HCT116 (cell line): ENCODE measurements at regions of chr16 and their contacts with region 1.

Region 1: DNA sequence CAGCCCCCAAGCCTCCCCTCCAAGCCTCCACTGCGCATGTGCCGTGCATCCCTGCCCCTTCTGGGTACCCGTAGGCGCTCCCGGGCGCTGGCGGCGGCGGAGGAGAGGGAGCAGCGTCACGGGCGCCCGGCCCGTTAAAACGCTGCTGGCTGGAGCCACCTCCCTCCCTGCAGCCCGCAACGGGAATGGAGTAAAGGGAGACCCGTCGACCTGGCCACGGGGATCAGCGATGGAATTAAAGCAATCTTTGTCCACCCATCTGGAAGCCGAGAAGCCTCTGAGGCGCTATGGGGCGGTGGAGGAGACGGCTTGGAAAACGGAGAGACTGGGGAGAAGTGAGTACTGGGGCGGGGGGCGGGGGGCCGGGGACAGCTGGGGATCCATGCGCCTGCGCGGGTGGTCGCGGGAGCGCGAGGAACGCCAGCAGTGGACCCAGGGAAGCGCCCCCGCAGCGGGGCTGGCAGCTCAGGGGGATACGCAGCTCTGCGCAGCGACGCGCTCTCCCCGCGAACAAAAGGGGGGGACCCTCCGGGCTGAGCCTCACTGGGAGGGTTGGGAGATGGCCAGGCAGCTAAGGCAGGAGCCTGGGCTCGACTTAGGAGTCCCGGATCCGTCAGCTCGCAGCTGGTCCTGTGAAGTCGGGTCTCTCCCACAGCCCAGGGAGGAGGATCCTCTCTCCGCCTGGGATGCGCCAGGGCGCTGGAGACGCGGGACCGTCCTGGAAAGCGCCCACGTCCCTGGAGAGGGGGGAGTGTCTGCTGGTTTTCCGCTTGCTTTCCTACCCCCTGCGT is at the start of gene BMERB1:
- DNase-seq: peak; percentile 12
- ATAC-seq: peak; percentile 76
- H3K4me3 ChIP-seq: peak within 1 kb of the TSS; percentile 68 to 71
- H3K27ac ChIP-seq: no peak within 1 kb of the TSS; the same call in 1 of the 2 replicates
- H3K4me1 ChIP-seq: peaks cover 18 to 34% of the 10 kb centered on the region in 2 experiments
- H3K27me3 ChIP-seq: no peaks in the 10 kb centered on the region
- CTCF ChIP-seq: no peak
- POLR2A ChIP-seq: no peak
- RAD21 ChIP-seq: no peak
- total RNA-seq, gene BMERB1: 43.6 TPM

Region 2: GRCh38 chr16:15415411-15416037 is 19.1 kb before region 1 on chr16:
- CTCF ChIA-PET with region 1: no interaction called
- POLR2A ChIA-PET with region 1: no interaction called
- RAD21 ChIA-PET with region 1: no interaction called
- intact Hi-C with region 1: no loop called
- DNase-seq: no peak
- ATAC-seq: no peak
- H3K4me3 ChIP-seq: no peak overlapping the region
- H3K27ac ChIP-seq: no peak overlapping the region
- H3K4me1 ChIP-seq: peaks cover 0 to 17% of the 10 kb centered on the region in 2 experiments; a peak in 2 of 4 replicates
- H3K27me3 ChIP-seq: no peaks in the 10 kb centered on the region
- CTCF ChIP-seq: no peak
- POLR2A ChIP-seq: no peak
- RAD21 ChIP-seq: no peak

Region 3: GRCh38 chr16:15482068-15482747 is 47.6 kb after region 1 on chr16:
- CTCF ChIA-PET with region 1: no interaction called
- POLR2A ChIA-PET with region 1: no interaction called
- RAD21 ChIA-PET with region 1: no interaction called
- intact Hi-C with region 1: loop called (anchors 10 kb)
- DNase-seq: peak; percentile 99
- ATAC-seq: peak; percentile 99
- H3K4me3 ChIP-seq: peak overlapping the region in 1 of 2 experiments; percentile 11; a peak in 2 of 4 replicates
- H3K27ac ChIP-seq: peak overlapping the region; percentile 87
- H3K4me1 ChIP-seq: peaks cover 19 to 69% of the 10 kb centered on the region in 2 experiments
- H3K27me3 ChIP-seq: no peaks in the 10 kb centered on the region
- CTCF ChIP-seq: peak in 2 of 3 experiments; percentile 10 to 13; a peak in 2 of 6 replicates
- POLR2A ChIP-seq: peak; percentile 70
- RAD21 ChIP-seq: peak; percentile 54; the same call in 1 of the 2 replicates

Region 4: DNA sequence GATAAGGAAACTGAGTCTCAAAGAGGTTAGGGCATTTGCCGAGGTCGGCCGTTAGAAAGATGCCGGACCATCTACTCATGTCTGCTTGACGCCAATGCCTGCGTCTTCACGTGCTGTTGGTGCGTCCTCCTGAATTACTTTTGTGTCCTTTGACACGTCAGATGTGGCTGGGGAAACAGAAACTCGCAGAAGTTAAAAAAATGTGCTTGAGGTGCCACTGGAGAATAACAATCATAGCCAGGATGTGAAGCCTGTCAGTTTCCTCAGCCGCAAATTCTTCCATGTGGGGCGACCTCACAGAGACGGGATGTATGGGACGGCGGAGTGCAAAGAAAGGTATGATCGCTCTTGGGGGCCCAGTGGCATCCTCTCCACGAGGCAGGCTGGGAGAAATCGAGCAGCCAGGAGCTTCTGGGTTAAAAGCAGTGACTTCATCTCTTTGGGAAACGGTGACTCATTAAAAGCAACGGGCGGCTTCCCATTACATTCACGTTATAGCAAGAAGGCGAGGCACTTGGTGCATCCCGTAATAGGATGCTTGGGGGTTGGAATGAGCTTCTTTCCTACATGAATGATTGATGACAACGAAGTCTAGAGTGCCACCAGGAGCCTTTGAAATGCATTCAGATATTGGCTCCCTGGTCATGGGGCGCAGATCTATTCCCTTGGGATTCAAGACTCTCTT is 67.6 kb after region 1 on chr16:
- CTCF ChIA-PET with region 1: no interaction called
- POLR2A ChIA-PET with region 1: no interaction called
- RAD21 ChIA-PET with region 1: no interaction called
- intact Hi-C with region 1: loop called (anchors 5 kb)
- DNase-seq: peak; percentile 95
- ATAC-seq: peak; percentile 82
- H3K4me3 ChIP-seq: peak overlapping the region in 1 of 2 experiments; percentile 41; a peak in 2 of 4 replicates
- H3K27ac ChIP-seq: peak overlapping the region; percentile 62
- H3K4me1 ChIP-seq: peaks cover 31 to 72% of the 10 kb centered on the region in 2 experiments
- H3K27me3 ChIP-seq: no peaks in the 10 kb centered on the region
- CTCF ChIP-seq: no peak
- POLR2A ChIP-seq: peak; percentile 42
- RAD21 ChIP-seq: peak; percentile 39; the same call in 1 of the 2 replicates

Region 5: GRCh38 chr16:15650019-15650697 is 215.5 kb after region 1 on chr16 and contains the start of gene NDE1:
- CTCF ChIA-PET with region 1: no interaction called
- POLR2A ChIA-PET with region 1: no interaction called
- RAD21 ChIA-PET with region 1: no interaction called
- intact Hi-C with region 1: no loop called
- DNase-seq: peak; percentile 74
- ATAC-seq: peak; percentile 96
- H3K4me3 ChIP-seq: peak within 1 kb of the TSS; percentile 91 to 96
- H3K27ac ChIP-seq: peak within 1 kb of the TSS; percentile 74
- H3K4me1 ChIP-seq: peaks cover 21 to 39% of the 10 kb centered on the region in 2 experiments
- H3K27me3 ChIP-seq: no peaks in the 10 kb centered on the region
- CTCF ChIP-seq: no peak
- POLR2A ChIP-seq: no peak
- RAD21 ChIP-seq: no peak
- total RNA-seq, gene NDE1: 103 TPM